HCT116 (cell line): ENCODE measurements at regions of chr16 and their contacts with region 1.

Region 1: DNA sequence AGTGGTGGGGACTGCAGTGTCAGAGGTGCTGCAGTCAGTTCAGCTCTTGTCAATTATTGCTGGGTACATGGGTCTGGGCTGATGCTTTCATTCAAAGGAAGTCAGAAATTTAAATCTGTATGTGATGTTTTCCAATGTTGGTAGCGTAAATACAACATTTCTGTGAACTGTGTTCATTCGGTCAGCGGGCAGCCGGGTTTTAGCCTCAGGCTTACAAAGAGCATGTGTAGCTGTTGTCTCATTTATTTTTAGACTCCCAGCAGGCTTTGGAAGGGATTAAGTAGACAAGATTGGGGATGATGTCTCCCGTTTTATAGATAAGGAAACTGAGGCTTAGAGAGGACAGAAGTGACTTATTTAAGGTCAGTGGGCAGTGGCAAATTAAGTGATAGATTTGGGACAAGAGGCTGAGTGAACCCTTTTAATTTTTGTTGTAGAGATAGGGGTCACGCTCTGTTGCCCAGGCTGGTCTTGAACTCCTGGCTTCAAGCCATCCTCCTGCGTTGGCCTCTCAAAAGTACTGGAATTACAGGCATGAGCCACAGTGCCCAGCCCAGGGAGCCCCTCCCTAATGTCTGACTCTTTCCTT is 8.1 kb downstream of the AQP8 start:
- DNase-seq: no peak
- ATAC-seq: peak; percentile 28
- H3K4me3 ChIP-seq: no peak overlapping the region
- H3K27ac ChIP-seq: no peak overlapping the region
- H3K4me1 ChIP-seq: peaks cover 0 to 11% of the 10 kb centered on the region in 2 experiments; a peak in 3 of 4 replicates
- H3K27me3 ChIP-seq: no peaks in the 10 kb centered on the region
- CTCF ChIP-seq: no peak
- POLR2A ChIP-seq: no peak
- RAD21 ChIP-seq: no peak

Region 2: DNA sequence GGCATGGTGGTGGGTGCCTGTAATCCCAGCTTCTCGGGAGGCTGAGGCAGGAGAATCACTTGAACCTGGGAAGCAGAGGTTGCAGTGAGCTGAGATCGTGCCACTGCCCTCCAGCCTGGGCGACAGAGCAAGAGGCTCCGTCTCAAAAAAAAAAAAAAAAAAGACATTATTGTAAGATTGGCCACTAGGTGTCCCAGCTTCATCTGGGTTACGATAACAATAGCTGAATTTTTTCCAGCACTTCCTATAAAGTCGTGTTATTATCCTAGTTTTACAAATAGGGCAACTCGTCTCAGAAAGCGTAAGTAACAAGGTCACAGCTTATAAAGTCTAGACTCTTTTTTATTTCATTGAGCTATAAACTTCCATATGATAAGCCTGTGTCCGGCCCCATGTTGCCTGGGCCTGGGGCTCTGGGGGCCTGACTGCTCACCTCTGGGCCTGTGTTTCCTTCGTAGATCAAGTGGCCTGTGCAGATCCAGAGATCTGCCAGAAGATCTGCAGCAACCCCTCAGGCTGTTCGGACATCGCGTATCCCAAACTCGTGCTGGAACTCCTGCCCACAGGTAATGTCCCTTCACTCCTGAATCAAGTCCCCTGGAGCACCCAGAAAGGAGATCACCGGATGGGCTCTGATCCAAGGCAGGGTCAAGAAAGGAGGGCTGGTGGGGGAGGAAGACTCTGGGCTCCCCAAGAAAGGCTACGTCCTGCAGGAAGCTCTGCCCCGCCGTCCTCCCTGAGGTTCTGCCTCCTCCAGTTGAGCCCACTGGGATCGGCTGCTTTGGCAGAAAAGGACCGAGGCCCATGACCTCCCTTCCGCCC is 318.4 kb before region 1 on chr16:
- CTCF ChIA-PET with region 1: interaction called, 10 read pairs
- POLR2A ChIA-PET with region 1: no interaction called
- RAD21 ChIA-PET with region 1: no interaction called
- intact Hi-C with region 1: no loop called
- DNase-seq: peak; percentile 19
- ATAC-seq: peak; percentile 73
- H3K4me3 ChIP-seq: no peak overlapping the region
- H3K27ac ChIP-seq: no peak overlapping the region
- H3K4me1 ChIP-seq: no peaks in the 10 kb centered on the region
- H3K27me3 ChIP-seq: no peaks in the 10 kb centered on the region
- CTCF ChIP-seq: peak; percentile 32 to 54 (median 46); a peak in 3 of 6 replicates
- POLR2A ChIP-seq: no peak
- RAD21 ChIP-seq: peak; percentile 46; the same call in 1 of the 2 replicates

Region 3: GRCh38 chr16:25111403-25112166 is 113.2 kb before region 1 on chr16 and contains the start of gene LCMT1:
- CTCF ChIA-PET with region 1: interaction called, 13 read pairs
- POLR2A ChIA-PET with region 1: interaction called, 4 read pairs
- RAD21 ChIA-PET with region 1: interaction called in 1 of 2 experiments, 3 read pairs
- intact Hi-C with region 1: no loop called
- DNase-seq: peak; percentile 96
- ATAC-seq: peak; percentile 78
- H3K4me3 ChIP-seq: peak within 1 kb of the TSS; percentile 81 to 97
- H3K27ac ChIP-seq: peak within 1 kb of the TSS; percentile 83
- H3K4me1 ChIP-seq: peaks cover 32 to 45% of the 10 kb centered on the region in 2 experiments
- H3K27me3 ChIP-seq: no peaks in the 10 kb centered on the region
- CTCF ChIP-seq: no peak
- POLR2A ChIP-seq: no peak
- RAD21 ChIP-seq: no peak
- total RNA-seq, gene LCMT1: 52.4 TPM

Region 4: GRCh38 chr16:25210758-25211157 is 14.1 kb before region 1 on chr16:
- CTCF ChIA-PET with region 1: interaction called, 10 read pairs
- POLR2A ChIA-PET with region 1: interaction called, 3 read pairs
- RAD21 ChIA-PET with region 1: no interaction called
- intact Hi-C with region 1: no loop called
- DNase-seq: no peak
- ATAC-seq: no peak
- H3K4me3 ChIP-seq: no peak overlapping the region
- H3K27ac ChIP-seq: no peak overlapping the region
- H3K4me1 ChIP-seq: peaks cover 0 to 4% of the 10 kb centered on the region in 2 experiments; a peak in 1 of 4 replicates
- H3K27me3 ChIP-seq: no peaks in the 10 kb centered on the region
- CTCF ChIP-seq: no peak
- POLR2A ChIP-seq: no peak
- RAD21 ChIP-seq: no peak